ENCODE measurements at regions of chr18 and their contacts with region 1.

Region 1: DNA sequence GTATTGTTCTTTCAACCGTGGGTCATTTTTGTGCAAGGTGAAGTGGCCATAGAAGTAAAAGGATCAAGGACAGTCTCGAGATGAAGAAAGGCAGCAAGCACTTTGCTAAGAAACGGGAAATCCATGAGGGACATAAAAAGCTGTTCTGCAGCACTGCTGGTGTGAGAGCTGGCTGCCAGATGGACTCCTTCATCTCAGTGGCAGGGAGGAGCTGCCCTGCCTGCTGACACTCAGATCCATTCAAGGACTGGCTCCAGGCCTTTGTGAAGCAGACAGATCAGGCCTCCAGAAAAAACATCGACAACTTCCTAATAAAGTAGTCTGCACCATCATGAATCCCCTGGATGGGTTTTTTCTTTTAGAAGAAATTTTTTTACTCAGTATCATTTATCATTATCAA is 29.5 kb downstream of the RMC1 start:
- DNase-seq: no peak
- H3K4me3 ChIP-seq: no peak overlapping the region
- CTCF ChIP-seq: no peak
- POLR2A ChIP-seq: no peak

Region 2: DNA sequence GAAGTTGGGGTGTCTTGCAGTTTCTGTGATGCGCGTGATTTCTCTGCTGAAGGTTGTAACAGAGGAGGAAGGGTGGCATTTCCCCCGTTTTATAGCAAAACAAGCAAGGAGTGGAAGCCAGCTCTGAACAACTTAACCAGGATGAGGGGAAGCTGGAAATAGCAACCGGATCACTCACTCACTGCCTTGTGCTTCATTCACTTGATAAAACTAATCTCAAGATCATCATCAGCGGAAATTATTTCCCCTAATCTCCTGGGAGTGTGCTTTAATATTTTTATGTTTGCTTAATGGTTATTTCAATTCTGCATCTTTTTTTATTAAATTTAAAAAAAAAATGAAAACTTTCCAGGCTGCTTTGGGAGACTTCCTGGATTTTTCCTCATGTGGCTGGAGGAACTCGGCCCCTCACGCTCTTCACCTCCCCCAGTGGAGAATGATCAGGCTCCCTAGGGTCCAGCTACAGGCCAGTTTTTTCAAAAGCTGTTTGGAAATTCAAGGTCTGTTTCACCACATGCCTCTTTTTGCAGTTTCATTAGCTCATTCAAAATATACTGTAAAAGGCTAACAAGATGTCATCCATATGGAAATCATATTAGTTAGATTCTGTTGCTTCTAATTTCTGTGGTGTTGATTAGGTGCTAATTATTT is 365.8 kb before region 1 on chr18:
- intact Hi-C with region 1: no loop called
- DNase-seq: no peak
- H3K4me3 ChIP-seq: no peak overlapping the region
- CTCF ChIP-seq: no peak
- POLR2A ChIP-seq: no peak

Region 3: GRCh38 chr18:23586249-23587196 is 53.7 kb after region 1 on chr18 and contains the start of gene NPC1:
- intact Hi-C with region 1: loop called (anchors 10 kb)
- DNase-seq: peak; percentile 90 to 98
- H3K4me3 ChIP-seq: peak within 1 kb of the TSS; percentile 89
- CTCF ChIP-seq: no peak
- POLR2A ChIP-seq: peak in 1 of 2 donors; percentile 66
- total RNA-seq, gene NPC1: 75.1 to 114 (median 100) TPM

Measured in lower leg skin (tissue), 4 donors.